Calu3 (cell line): ENCODE measurements at regions of chr19 and their contacts with region 1.

Region 1: DNA sequence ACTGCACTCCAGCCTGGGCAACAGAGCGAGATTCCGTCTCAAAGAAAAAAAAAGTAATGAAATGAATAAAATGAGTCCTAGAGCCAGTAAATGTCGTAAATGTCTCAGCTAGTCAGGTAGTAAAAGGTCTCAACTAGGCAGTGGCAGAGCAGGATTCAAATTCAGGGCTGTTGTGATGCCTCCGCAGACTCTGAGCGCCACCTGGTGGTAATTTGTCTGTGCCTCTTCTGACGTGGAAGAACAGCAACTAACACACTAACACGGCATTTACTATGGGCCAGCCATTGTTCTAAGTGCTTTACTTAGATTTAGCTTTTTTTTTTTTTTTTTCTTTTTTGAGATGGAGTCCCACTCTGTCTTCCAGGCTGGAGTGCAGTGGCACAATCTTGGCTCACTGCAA is 30.2 kb downstream of the CYP2F1 start:
- DNase-seq: peak; percentile 93
- H3K4me3 Mint-ChIP-seq: no peak overlapping the region
- H3K27ac Mint-ChIP-seq: no peak overlapping the region
- H3K4me1 Mint-ChIP-seq: no peaks in the 10 kb centered on the region
- H3K27me3 Mint-ChIP-seq: no peaks in the 10 kb centered on the region
- CTCF ChIP-seq: peak; percentile 97

Region 2: DNA sequence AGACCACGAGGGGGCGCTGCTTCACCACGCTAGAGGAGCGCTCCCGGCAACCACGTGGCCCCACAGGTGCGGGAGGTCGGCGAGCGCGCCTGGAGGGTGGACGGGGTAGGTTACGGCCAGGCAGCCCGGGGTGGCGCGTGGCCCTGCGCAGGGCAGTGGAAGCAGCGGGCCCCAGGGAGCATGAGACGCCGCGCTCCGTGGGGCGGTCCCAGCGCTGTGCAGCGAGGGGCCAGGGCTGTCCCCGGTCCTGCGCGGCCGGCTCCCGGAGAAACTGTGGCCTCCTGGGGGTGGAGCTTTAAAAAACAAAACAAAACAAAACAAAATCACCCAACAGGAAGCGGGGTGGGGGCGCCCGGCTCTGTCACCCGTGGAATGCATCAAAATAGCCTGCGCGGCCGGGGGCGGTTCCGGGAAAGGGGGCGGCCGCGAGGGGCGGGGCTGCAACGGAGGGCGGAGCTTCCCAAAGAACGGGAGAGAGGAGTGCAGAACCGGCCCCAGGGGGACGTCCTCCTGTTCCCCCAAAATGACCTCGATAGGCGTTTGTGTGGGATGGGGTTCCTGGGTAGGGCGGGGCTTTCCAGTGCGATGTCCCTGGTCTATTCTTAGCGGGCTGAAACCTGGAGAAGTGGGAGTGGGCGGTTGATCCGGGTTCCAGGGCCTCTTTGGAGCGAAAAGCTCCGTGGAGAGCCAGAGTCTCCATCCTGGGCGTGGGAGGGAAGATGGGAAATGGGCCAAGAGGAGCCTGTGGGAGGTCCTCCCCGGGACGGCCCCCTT is 481.3 kb before region 1 on chr19:
- CTCF ChIA-PET with region 1: interaction called, 5 read pairs
- intact Hi-C with region 1: loop called (anchors 2 kb)
- DNase-seq: peak; percentile 98
- H3K4me3 Mint-ChIP-seq: peak overlapping the region; percentile 79
- H3K27ac Mint-ChIP-seq: peak overlapping the region; percentile 69
- H3K4me1 Mint-ChIP-seq: peaks cover 22% of the 10 kb centered on the region
- H3K27me3 Mint-ChIP-seq: no peaks in the 10 kb centered on the region
- CTCF ChIP-seq: peak; percentile 100

Region 3: DNA sequence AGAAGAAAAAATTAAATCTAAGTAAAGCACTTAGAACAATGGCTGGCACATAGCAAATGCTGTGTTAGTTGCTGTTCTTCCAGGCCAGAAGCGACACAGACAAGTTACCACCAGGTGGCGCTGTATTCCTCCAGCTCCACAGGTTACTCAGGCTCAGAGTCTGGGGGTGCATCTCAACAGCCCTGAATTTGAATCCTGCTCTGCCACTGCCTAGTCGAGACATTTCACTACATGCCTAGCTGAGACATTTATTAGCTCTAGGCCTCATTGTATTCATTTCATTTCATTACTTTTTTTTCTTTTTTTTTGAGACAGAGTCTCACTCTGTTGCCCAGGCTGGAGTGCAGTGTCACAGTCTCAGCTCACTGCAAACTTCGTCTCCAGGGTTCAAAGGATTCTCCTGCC is 169.8 kb before region 1 on chr19:
- CTCF ChIA-PET with region 1: interaction called, 16 read pairs
- intact Hi-C with region 1: loop called (anchors 1 kb)
- DNase-seq: peak; percentile 85
- H3K4me3 Mint-ChIP-seq: no peak overlapping the region
- H3K27ac Mint-ChIP-seq: no peak overlapping the region
- H3K4me1 Mint-ChIP-seq: peaks cover 4% of the 10 kb centered on the region
- H3K27me3 Mint-ChIP-seq: no peaks in the 10 kb centered on the region
- CTCF ChIP-seq: peak; percentile 93

Region 4: GRCh38 chr19:41025871-41026270 is 118.5 kb before region 1 on chr19:
- CTCF ChIA-PET with region 1: interaction called, 3 read pairs
- intact Hi-C with region 1: loop called (anchors 1 kb)
- DNase-seq: peak; percentile 60
- H3K4me3 Mint-ChIP-seq: peak overlapping the region; percentile 9
- H3K27ac Mint-ChIP-seq: no peak overlapping the region
- H3K4me1 Mint-ChIP-seq: peaks cover 33% of the 10 kb centered on the region
- H3K27me3 Mint-ChIP-seq: peaks cover 53% of the 10 kb centered on the region
- CTCF ChIP-seq: no peak